Dorsolateral prefrontal cortex (tissue), 120 donors: ENCODE measurements at regions of chr17 and their contacts with region 1.

Region 1: GRCh38 chr17:56478836-56479447 is 114.6 kb upstream of the NOG start:
- DNase-seq: no peak
- H3K4me3 ChIP-seq: no peak overlapping the region
- H3K27ac ChIP-seq: no peak overlapping the region
- H3K27me3 ChIP-seq: peaks cover 0 to 11% (median 0%) of the 10 kb centered on the region in 45 donors
- CTCF ChIP-seq: peak in 55 of 56 donors; percentile 15 to 68 (median 47)

Region 2: GRCh38 chr17:56125830-56126819 is 352.8 kb before region 1 on chr17:
- intact Hi-C with region 1: loop called in 1 of 2 experiments (anchors 5 kb)
- DNase-seq: no peak
- H3K4me3 ChIP-seq: no peak overlapping the region
- H3K27ac ChIP-seq: no peak overlapping the region
- H3K27me3 ChIP-seq: peaks cover 0 to 24% (median 0%) of the 10 kb centered on the region in 45 donors
- CTCF ChIP-seq: peak in 39 of 56 donors; percentile 11 to 61 (median 33)

Region 3: DNA sequence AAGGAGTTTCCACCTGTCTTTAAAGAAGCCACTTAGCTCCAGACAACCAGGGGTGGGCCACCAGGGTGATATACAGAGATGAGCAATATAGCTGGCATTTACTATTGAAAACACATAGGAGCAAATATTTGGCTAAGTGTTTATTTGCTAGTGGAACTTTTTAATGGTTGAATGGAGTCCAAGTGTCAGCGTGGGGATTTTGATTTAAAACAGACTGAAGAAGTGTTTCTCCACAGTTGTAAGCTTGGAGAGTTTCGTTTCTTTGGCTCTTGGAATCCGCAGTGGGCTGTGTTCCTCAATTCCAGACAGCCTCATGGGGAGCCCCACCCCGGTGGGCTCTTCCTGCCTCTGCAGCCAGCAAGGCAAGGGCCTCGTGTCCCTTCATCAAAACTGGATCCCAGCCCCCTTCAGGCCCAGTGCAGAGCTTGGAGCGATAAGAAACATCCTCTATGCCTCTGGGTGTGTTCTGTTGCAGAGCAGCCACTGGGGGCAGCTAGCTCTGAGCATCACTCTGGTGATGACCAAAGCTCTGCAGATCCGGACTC is 150.7 kb after region 1 on chr17:
- intact Hi-C with region 1: no loop called
- DNase-seq: peak in 1 of 10 donors; percentile 12
- H3K4me3 ChIP-seq: no peak overlapping the region
- H3K27ac ChIP-seq: no peak overlapping the region
- H3K27me3 ChIP-seq: peaks cover 0 to 28% (median 0%) of the 10 kb centered on the region in 45 donors
- CTCF ChIP-seq: peak in 6 of 56 donors; percentile 12 to 40 (median 16)